ENCODE measurements at regions of chr6 and their contacts with region 1.

Region 1: DNA sequence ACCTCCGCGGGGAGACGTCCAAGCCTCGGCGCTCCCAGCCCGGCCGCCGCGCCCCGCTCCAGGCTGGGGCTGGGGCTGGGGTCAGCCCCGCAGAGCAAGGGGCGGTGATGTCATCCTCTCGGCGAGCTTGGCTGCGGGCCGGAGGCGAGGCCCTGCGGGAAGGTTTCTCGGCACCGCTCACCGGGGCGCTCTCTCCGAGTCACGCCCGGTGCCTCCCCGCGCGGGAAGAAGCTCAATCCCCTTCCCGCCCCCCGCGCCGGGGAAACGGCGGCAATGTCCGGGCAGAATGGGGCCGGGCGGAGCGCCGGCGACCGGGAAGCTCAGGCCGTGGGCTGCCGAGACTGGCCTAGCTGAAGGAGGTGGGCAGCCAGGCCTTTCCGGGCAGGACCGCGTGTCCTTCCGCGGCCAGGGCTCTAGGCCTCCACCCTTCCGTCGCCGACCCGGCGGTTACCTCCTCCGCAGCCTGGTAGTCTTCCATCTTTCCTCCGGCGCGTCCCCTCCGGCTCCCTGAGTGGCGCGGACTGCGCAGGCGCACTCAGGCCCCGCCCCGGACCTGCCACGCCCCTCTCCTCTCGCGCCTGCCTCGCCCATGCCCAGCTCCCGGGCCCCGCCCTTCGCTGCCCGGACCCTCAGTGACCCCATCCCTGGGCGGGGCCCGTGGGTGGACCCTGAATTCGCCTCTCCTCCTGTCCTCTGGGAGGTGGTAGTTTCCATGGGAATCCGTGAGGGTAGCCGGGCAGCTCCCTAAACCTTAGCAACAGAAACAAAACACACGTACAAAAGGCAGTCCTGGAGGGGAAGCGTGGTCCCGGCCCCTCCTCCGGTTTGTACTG is at the start of gene DYNLT1:
- DNase-seq: peak; percentile 93
- ATAC-seq: peak; percentile 73
- H3K4me3 Mint-ChIP-seq: peak within 1 kb of the TSS; percentile 100
- H3K27ac Mint-ChIP-seq: peak within 1 kb of the TSS; percentile 97
- H3K4me1 Mint-ChIP-seq: peaks cover 70% of the 10 kb centered on the region
- H3K27me3 Mint-ChIP-seq: no peaks in the 10 kb centered on the region
- total RNA-seq, gene DYNLT1: 109 to 120 TPM

Region 2: DNA sequence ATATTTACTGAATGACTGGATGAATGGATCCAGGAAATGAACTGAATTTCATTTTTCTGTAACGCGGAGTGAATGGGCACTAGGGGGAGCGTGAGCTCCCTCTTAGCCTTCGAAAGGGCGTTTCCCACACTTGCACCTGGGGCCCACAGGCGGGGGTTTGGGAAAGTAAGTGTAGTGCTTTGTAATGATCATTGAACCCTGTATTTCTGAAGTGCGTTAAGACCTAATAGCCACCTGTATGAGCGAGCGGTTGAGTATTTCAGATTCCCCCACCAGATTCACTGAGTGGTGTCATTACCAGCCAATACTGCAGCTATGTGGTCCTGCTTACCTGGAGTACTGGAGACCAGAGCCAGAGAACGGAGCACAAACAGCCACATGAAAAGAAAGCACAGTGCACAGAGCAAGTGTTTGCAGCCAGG is 15.9 kb after region 1 on chr6:
- CTCF ChIA-PET with region 1: interaction called, 36 read pairs
- DNase-seq: peak; percentile 61
- ATAC-seq: peak; percentile 70
- H3K4me3 Mint-ChIP-seq: no peak overlapping the region
- H3K27ac Mint-ChIP-seq: peak overlapping the region; percentile 40
- H3K4me1 Mint-ChIP-seq: peaks cover 45% of the 10 kb centered on the region
- H3K27me3 Mint-ChIP-seq: no peaks in the 10 kb centered on the region

Region 3: GRCh38 chr6:158715964-158716311 is 71.5 kb after region 1 on chr6:
- CTCF ChIA-PET with region 1: no interaction called
- DNase-seq: no peak
- ATAC-seq: no peak
- H3K4me3 Mint-ChIP-seq: no peak overlapping the region
- H3K27ac Mint-ChIP-seq: peak overlapping the region; percentile 36
- H3K4me1 Mint-ChIP-seq: peaks cover 76% of the 10 kb centered on the region
- H3K27me3 Mint-ChIP-seq: no peaks in the 10 kb centered on the region